ENCODE measurements at regions of chr1 and their contacts with region 1.

Region 1: GRCh38 chr1:174743654-174744561 is 255.8 kb upstream of the CACYBP start:
- DNase-seq: no peak
- H3K4me3 Mint-ChIP-seq: no peak overlapping the region
- H3K27ac Mint-ChIP-seq: no peak overlapping the region
- H3K4me1 Mint-ChIP-seq: no peaks in the 10 kb centered on the region
- H3K27me3 Mint-ChIP-seq: peaks cover 2% of the 10 kb centered on the region

Region 2: DNA sequence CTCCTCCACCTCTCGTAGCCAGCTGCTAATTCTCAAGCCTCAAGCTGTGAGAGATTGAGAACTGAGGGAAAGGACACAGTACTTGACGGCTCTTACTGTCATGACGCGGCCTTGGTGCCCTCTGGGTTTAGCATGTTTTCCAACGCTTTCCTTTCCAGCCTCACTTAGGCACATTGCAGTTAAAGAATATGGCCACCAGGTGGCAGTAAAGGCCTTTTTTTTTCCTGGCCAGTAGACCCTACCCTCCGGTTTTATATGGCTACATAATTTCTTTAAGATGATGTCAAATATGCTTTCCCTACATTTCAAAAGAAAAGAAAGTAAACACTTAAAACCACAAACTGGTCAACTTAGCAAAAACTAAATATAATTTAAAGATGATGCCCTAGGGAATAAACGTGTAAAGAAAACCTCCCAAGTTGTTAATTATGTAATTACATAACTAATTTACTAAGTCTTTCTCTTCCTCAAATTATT is 1323.5 kb before region 1 on chr1:
- intact Hi-C with region 1: loop called (anchors 5 kb)
- DNase-seq: peak; percentile 42
- H3K4me3 Mint-ChIP-seq: no peak overlapping the region
- H3K27ac Mint-ChIP-seq: no peak overlapping the region
- H3K4me1 Mint-ChIP-seq: peaks cover 13% of the 10 kb centered on the region
- H3K27me3 Mint-ChIP-seq: no peaks in the 10 kb centered on the region

Region 3: GRCh38 chr1:174262349-174263241 is 481.3 kb before region 1 on chr1:
- intact Hi-C with region 1: loop called (anchors 1 kb)
- DNase-seq: no peak
- H3K4me3 Mint-ChIP-seq: no peak overlapping the region
- H3K27ac Mint-ChIP-seq: no peak overlapping the region
- H3K4me1 Mint-ChIP-seq: no peaks in the 10 kb centered on the region
- H3K27me3 Mint-ChIP-seq: no peaks in the 10 kb centered on the region

Region 4: DNA sequence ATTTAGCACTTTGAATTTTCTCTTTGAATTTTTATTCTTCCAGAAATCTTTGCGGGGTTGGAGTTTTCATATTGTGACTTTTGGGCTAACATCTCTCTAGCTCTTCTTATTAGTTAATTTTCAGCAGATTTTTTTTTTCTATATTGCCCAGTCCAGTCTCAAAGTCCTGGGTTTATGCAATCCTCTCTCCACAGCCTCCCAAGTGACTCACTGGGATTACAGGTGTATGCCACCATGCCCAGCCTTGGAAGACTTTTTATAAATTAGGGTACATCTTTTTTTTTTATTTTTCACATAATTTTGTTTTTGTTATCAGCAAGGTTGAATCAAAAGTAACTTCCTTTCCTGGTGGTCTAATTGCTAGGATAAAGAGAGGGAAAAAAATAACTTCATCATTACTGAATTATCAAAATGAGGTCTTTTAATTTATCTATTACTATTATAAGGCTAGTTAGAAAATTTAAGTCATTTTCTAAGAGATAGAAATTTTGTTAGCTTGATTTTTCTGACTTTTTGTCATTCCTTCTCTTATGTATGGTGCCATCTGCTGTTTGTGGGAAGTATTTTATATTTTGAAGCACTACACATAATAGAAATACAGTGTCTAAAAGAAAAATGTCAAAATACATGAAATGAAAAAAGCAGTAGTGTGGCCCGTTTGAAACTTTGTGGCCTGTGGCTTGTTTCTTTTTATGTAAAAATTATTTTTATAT is 17.6 kb before region 1 on chr1:
- intact Hi-C with region 1: loop called (anchors 1 kb)
- DNase-seq: no peak
- H3K4me3 Mint-ChIP-seq: no peak overlapping the region
- H3K27ac Mint-ChIP-seq: no peak overlapping the region
- H3K4me1 Mint-ChIP-seq: no peaks in the 10 kb centered on the region
- H3K27me3 Mint-ChIP-seq: no peaks in the 10 kb centered on the region

Measured in activated T-helper 1 cell treated with anti-CD3 and anti-CD28 coated beads, Interleukin-12 subunit alpha, Interleukin-12 subunit beta, Interleukin-2, Interleukin-4 antibody, amounts not matched to agents 30 ng/mL and 10 ng/mL and 1 ng/mL, durations not matched to agents 14 hours and 24 hours and 36 hours (primary cell).